Activated T-helper 2 cell treated with anti-CD3 and anti-CD28 coated beads, Interferon-gamma antibody, Interleukin-2, Interleukin-4, amounts not matched to agents 10 μg/mL and 5 μg/mL and 100 μg/mL, durations not matched to agents 14 hours and 24 hours and 36 hours (primary cell): ENCODE measurements at regions of chr19 and their contacts with region 1.

Region 1: GRCh38 chr19:46115396-46116106 is 8.9 kb downstream of the IGFL3 start:
- DNase-seq: peak; percentile 14
- H3K4me3 Mint-ChIP-seq: no peak overlapping the region
- H3K27ac Mint-ChIP-seq: peak overlapping the region; percentile 3
- H3K4me1 Mint-ChIP-seq: peaks cover 24% of the 10 kb centered on the region
- H3K27me3 Mint-ChIP-seq: peaks cover 22% of the 10 kb centered on the region

Region 2: DNA sequence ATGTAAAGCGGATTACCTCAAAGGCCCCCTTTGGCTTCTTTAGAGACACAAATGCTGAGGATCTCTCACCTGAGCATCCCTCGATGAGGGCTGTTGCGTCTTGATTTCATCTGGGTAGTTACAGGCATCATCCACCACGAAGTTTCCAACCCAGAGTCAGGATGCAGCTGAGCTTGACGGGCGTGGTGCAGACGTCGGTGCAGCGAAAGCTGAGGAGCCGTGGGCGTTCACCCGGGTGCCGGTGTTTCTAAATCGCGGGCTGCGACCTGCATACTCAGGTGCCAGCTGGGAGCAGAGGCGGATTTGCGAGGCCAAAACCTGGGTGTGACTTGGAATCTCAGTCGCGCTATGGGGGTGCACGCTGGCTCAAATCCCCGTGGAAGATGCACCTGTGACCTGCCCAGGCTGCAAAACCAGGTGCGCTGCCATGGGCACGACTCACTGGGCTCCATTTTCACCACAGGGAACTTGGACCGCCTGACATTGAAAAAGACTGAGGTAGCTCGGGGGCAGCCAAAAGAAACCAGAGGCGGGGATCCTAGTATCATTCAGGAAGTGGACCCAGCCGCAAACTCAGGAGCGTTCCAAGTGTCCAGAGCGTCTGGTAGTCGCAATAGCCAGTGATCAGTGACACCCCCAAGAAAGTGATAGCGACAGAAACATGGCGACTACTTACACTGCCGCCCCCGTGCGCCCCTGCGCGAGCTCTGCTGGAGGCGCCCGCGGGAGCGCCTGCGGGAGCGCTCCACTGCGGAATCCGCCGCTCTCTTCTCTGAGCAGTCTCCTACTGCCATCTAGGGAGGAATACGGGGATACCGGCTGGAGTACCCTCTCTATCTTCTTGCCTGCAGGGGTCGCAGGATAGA is 38.4 kb before region 1 on chr19:
- intact Hi-C with region 1: no loop called
- DNase-seq: no peak
- H3K4me3 Mint-ChIP-seq: no peak overlapping the region
- H3K27ac Mint-ChIP-seq: no peak overlapping the region
- H3K4me1 Mint-ChIP-seq: peaks cover 4% of the 10 kb centered on the region
- H3K27me3 Mint-ChIP-seq: peaks cover 77% of the 10 kb centered on the region

Region 3: DNA sequence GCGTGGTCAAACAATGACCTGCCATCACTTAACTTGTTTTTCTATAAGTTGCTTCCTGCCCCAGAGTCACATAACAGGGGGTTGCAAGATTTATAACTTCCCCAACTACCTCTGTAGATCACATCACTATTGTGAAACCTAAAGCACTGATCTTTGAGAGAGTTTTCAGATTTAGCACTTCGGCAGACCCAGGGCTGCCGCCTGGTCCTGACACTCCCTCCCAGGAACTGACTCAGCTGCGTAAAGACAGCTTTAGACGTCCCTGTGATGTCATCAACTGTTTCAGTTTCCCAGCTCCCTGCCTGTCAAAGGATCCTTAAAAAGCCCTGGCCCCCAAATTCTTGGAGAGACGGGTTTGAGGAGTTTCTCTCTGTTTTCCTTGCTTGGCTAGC is 65.8 kb after region 1 on chr19:
- intact Hi-C with region 1: loop called (anchors 2 kb)
- DNase-seq: no peak
- H3K4me3 Mint-ChIP-seq: no peak overlapping the region
- H3K27ac Mint-ChIP-seq: no peak overlapping the region
- H3K4me1 Mint-ChIP-seq: peaks cover 28% of the 10 kb centered on the region
- H3K27me3 Mint-ChIP-seq: peaks cover 21% of the 10 kb centered on the region

Region 4: GRCh38 chr19:46192992-46193650 is 77.6 kb after region 1 on chr19:
- intact Hi-C with region 1: no loop called
- DNase-seq: peak; percentile 44
- H3K4me3 Mint-ChIP-seq: no peak overlapping the region
- H3K27ac Mint-ChIP-seq: peak overlapping the region; percentile 79
- H3K4me1 Mint-ChIP-seq: peaks cover 14% of the 10 kb centered on the region
- H3K27me3 Mint-ChIP-seq: peaks cover 40% of the 10 kb centered on the region